ENCODE measurements at regions of chr2 and their contacts with region 1.

Region 1: GRCh38 chr2:191020221-191020741 is 6.3 kb upstream of the STAT1 start:
- DNase-seq: peak; percentile 96
- ATAC-seq: peak; percentile 97
- H3K4me3 ChIP-seq: peak overlapping the region; percentile 90 to 96 (median 92)
- H3K27ac ChIP-seq: peak overlapping the region; percentile 98
- H3K4me1 ChIP-seq: peaks cover 32% of the 10 kb centered on the region
- H3K27me3 ChIP-seq: peaks cover 0 to 7% of the 10 kb centered on the region in 2 experiments; a peak in 1 of 5 replicates
- CTCF ChIP-seq: peak; percentile 37; the same call in 1 of the 2 replicates
- EP300 ChIP-seq: peak; percentile 92 to 100
- POLR2A ChIP-seq: peak; percentile 96 to 99
- RAD21 ChIP-seq: peak; percentile 61

Region 2: GRCh38 chr2:191041418-191042161 is 21.3 kb after region 1 on chr2:
- CTCF ChIA-PET with region 1: no interaction called
- POLR2A ChIA-PET with region 1: interaction called, 10 read pairs
- in situ Hi-C with region 1: no loop called
- intact Hi-C with region 1: no loop called
- DNase-seq: peak; percentile 86
- ATAC-seq: peak; percentile 100
- H3K4me3 ChIP-seq: no peak overlapping the region
- H3K27ac ChIP-seq: no peak overlapping the region
- H3K4me1 ChIP-seq: peaks cover 14% of the 10 kb centered on the region
- H3K27me3 ChIP-seq: peaks cover 0 to 5% of the 10 kb centered on the region in 2 experiments; a peak in 1 of 5 replicates
- CTCF ChIP-seq: no peak
- EP300 ChIP-seq: 0 out of 4 replicates have a peak, but pooled peaks of 1 of the 2 experiments have one; percentile 30
- POLR2A ChIP-seq: no peak
- RAD21 ChIP-seq: no peak